ENCODE measurements at regions of chr1 and their contacts with region 1.

Region 1: DNA sequence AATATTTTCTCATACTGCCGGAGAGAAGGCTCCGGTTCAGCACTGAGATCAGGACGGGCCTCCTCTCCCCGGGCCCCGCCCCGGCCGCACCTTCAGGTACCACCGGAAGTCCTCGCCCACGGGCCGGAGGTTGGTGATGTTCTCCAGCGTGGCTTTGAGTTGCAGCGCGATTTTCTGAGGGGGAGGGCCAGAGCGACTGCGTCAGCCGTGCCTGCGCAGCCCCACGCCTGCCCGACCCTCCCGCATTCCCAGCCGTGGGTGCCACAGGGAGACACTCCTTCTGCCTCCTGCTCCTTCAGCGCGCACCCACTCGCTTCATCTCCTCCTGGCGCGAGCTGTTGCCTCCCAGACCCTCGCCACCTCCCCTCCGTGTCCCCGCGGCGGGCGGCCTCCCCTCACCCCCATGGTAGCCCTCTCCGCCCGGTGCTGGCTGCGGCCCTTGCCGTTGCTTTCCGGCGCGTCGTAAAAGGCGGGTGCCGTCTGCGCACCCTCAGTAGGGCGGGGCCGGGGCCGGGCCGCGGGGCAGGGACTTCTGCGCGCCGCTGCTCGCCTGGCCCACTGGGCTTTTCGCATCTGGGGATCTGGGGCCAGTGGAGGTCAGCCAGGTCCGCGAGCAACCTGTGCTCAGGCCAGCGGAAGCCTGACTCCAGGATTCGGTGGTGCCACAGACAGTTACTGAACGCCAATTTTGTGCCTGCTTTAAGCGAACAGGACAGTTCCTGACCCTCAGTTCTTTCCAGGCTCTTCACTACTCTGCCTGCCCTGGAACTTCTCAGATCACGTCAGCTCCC is at the start of gene CZIB:
- DNase-seq: peak; percentile 68
- ATAC-seq: peak; percentile 98
- H3K4me3 ChIP-seq: peak within 1 kb of the TSS; percentile 69 to 70
- H3K27ac ChIP-seq: peak within 1 kb of the TSS; percentile 92
- H3K4me1 ChIP-seq: peaks cover 14% of the 10 kb centered on the region
- H3K27me3 ChIP-seq: no peaks in the 10 kb centered on the region
- CTCF ChIP-seq: no peak
- total RNA-seq, gene CZIB: 57.2 TPM

Region 2: DNA sequence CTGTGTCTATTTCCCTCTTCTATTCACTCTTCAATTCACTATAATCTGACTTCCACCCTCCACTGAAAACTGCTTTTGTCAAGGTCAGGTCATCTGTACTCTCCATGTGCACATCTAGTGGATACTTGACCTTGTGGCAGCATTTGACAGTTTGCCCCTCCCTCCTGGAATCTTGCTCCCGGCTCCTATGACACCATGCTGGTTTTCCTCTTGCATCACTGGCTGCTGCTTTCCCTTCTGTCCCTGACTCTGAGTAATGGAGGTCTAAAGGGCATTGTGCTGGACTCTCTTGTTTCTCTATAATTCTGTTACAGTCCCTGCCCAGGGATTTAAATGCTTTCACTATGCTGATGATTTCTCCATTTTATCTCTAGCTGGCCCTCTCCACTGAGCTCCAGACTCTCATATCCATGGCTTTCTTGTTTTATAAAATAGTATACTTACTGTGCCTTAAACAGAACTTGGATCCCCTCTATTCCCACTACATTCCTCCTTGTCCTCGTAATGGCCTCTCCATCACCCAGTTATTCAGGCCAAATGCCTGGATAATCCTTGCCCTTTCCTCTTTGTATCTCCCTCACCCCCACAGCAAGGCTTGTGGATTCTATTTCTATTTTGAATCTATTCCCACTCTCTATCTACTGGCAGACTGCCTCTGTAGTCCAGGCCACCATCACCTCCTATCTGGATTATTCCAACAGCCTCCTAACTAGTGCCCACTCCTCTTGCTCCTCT is 195.2 kb before region 1 on chr1:
- CTCF ChIA-PET with region 1: no interaction called
- POLR2A ChIA-PET with region 1: interaction called, 14 read pairs
- in situ Hi-C with region 1: no loop called
- intact Hi-C with region 1: no loop called
- DNase-seq: no peak
- ATAC-seq: no peak
- H3K4me3 ChIP-seq: no peak overlapping the region
- H3K27ac ChIP-seq: no peak overlapping the region
- H3K4me1 ChIP-seq: no peaks in the 10 kb centered on the region
- H3K27me3 ChIP-seq: no peaks in the 10 kb centered on the region
- CTCF ChIP-seq: no peak

Measured in Panc1 (cell line).